AG04449 (cell line): ENCODE measurements at regions of chr1 and their contacts with region 1.

Region 1: DNA sequence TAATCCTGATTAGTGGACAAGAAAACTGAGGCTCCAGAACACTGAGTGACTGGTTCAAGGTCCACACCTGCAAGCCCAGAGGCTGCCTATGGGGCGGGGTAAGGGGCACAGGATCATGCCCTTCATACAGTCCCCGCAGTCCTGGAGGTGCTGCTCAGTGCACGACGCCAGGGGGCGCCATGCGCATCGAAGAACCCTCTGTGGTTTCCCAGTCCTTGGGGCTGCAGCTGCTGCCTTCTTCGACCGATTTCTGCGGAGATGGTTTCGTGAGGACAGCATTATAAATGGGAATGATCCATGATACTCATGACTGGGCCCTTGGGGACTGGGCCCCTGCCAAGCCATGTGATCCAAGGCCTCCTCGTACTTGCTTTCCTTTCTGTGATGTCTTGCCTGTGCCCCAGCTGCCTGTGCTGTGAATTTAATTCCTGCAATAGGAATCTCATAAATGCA is 37.1 kb upstream of the ARHGEF10L start:
- DNase-seq: peak; percentile 57
- H3K4me3 ChIP-seq: no peak overlapping the region
- CTCF ChIP-seq: peak; percentile 96

Region 2: GRCh38 chr1:17207966-17208418 is 294.4 kb before region 1 on chr1:
- CTCF ChIA-PET with region 1: no interaction called
- POLR2A ChIA-PET with region 1: no interaction called
- DNase-seq: no peak
- H3K4me3 ChIP-seq: no peak overlapping the region
- CTCF ChIP-seq: no peak

Region 3: GRCh38 chr1:17470021-17470799 is 32.1 kb before region 1 on chr1:
- CTCF ChIA-PET with region 1: no interaction called
- POLR2A ChIA-PET with region 1: no interaction called
- DNase-seq: no peak
- H3K4me3 ChIP-seq: no peak overlapping the region
- CTCF ChIP-seq: no peak

Region 4: GRCh38 chr1:17485280-17485679 is 17.1 kb before region 1 on chr1:
- CTCF ChIA-PET with region 1: interaction called, 14 read pairs
- POLR2A ChIA-PET with region 1: no interaction called
- DNase-seq: no peak
- H3K4me3 ChIP-seq: no peak overlapping the region
- CTCF ChIP-seq: peak; percentile 44

Region 5: GRCh38 chr1:17520071-17520813 is 17.9 kb after region 1 on chr1:
- CTCF ChIA-PET with region 1: interaction called, 10 read pairs
- POLR2A ChIA-PET with region 1: no interaction called
- DNase-seq: no peak
- H3K4me3 ChIP-seq: no peak overlapping the region
- CTCF ChIP-seq: no peak

Region 6: DNA sequence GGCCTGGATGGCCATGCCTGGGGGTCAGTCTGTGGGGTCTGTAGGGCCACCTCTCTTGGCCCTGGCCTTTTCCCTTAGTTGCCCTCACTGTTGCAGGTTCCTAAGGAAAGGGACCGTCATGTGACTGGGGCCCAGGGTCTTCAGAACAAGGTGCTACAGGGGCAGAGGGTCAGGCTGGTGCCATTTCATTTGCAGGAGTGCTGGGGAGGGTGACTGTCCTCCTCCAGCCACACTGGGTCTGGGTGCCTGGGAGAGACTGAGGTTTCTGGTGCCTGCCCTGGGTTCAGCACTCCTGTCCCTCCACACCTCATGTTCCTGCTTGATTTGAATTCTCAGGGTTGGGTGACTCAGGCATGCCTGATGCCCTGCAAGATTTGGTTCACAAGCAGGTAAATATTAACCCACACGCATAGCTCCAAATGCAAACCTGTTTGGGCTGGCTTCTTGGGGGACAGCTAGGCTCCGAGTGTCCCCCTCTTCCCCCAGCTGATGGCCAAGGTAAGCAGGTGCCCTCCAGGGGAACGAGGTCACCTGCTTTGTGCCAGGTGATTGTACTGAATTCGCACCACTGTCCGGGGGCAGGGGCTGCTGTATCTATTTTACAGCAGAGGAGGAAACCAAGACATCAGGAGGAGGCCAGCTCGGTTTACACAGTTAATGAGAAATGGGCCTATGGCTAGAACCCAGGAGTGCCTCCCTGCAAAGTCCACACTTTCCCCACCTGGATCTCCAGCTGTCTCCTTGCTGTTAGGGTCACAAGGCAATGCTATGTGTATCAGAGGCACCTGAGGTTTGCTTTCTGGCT is 57.5 kb after region 1 on chr1:
- CTCF ChIA-PET with region 1: interaction called, 17 read pairs
- POLR2A ChIA-PET with region 1: no interaction called
- DNase-seq: no peak
- H3K4me3 ChIP-seq: no peak overlapping the region
- CTCF ChIP-seq: no peak

Region 7: GRCh38 chr1:17574516-17574915 is 72.2 kb after region 1 on chr1:
- CTCF ChIA-PET with region 1: interaction called, 16 read pairs
- POLR2A ChIA-PET with region 1: no interaction called
- DNase-seq: no peak
- H3K4me3 ChIP-seq: no peak overlapping the region
- CTCF ChIP-seq: peak; percentile 20

Region 8: DNA sequence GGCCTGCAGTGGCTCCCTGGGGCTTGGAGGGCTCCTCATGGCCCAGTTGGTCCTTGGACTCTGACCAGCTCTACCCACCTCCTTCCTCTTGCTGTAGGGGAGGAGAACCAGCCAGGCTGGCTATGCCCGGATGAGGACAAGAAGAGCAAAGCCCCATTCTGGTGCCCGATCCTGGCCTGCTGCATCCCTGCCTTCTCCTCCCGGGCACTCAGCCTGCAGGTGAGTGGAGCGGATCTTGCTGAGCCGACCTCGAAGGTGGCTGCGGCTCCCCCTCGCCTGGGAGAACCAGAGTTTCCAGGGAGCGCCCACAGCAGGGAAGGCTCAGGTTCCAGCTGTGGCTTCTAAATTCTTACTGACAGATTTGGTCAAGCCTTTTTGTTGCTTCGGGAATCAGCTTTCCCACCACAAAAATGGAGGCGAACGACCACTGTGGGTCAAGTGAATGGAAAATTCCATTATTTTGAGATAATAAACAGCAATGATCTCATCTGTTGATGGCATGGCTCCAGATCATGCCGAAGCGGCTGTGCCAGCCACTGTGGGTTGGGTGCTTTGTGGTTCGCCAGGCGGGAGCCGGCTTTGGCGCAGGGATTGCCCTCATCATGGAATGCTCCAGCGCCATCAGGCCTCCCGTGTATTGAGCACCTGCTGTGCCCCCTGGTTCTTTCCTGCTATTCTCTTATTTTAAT is 146.2 kb after region 1 on chr1:
- CTCF ChIA-PET with region 1: interaction called, 25 read pairs
- POLR2A ChIA-PET with region 1: no interaction called
- DNase-seq: no peak
- H3K4me3 ChIP-seq: no peak overlapping the region
- CTCF ChIP-seq: no peak

Region 9: DNA sequence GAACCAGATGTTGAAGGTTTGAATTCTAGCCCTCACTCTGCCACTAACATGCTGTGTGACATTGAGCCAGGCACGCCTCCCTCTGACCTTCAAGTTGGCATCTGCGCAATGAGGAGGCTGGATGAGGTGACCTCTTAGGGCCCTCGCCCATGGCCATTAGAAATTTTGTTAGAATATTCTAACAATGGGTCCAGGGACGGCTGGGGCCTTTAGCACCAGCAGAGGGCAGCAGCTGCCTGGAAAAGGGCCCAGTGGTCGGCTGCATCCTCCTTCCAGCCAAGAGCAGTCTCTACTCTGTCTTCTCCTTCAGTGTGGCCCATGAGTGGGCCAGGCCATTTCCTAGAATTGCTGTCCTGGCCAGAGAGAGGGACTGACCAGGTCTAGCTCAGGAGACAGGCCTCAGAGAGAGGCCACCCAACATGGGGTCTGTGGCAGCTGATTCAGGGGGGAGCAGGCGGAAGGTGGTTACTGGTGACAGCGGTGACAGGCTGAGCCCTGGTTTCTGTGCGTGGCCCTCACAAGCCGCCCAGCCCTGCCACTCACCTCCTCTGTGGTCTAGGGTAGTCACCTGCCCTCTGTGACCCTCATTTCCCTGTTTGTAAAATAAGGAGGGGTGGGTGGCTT is 151.5 kb after region 1 on chr1:
- CTCF ChIA-PET with region 1: interaction called, 25 read pairs
- POLR2A ChIA-PET with region 1: no interaction called
- DNase-seq: no peak
- H3K4me3 ChIP-seq: no peak overlapping the region
- CTCF ChIP-seq: peak; percentile 89

Region 10: GRCh38 chr1:17700945-17701810 is 198.8 kb after region 1 on chr1:
- CTCF ChIA-PET with region 1: no interaction called
- POLR2A ChIA-PET with region 1: no interaction called
- DNase-seq: no peak
- H3K4me3 ChIP-seq: no peak overlapping the region
- CTCF ChIP-seq: no peak